MCF 10A (cell line): ENCODE measurements at regions of chr7 and their contacts with region 1.

Region 1: GRCh38 chr7:39948956-39949928 is 814 bp upstream of the CDK13 start:
- DNase-seq: peak; percentile 99
- H3K4me3 Mint-ChIP-seq: peak overlapping the region; percentile 96
- H3K27ac Mint-ChIP-seq: peak overlapping the region; percentile 96
- H3K4me1 Mint-ChIP-seq: no peaks in the 10 kb centered on the region
- H3K27me3 Mint-ChIP-seq: no peaks in the 10 kb centered on the region
- CTCF ChIP-seq: no peak

Region 2: GRCh38 chr7:39937366-39938153 is 11.7 kb before region 1 on chr7:
- CTCF ChIA-PET with region 1: interaction called, 5 read pairs
- POLR2A ChIA-PET with region 1: interaction called, 40 read pairs
- intact Hi-C with region 1: no loop called
- DNase-seq: peak; percentile 63
- H3K4me3 Mint-ChIP-seq: no peak overlapping the region
- H3K27ac Mint-ChIP-seq: no peak overlapping the region
- H3K4me1 Mint-ChIP-seq: peaks cover 8% of the 10 kb centered on the region
- H3K27me3 Mint-ChIP-seq: no peaks in the 10 kb centered on the region
- CTCF ChIP-seq: no peak

Region 3: DNA sequence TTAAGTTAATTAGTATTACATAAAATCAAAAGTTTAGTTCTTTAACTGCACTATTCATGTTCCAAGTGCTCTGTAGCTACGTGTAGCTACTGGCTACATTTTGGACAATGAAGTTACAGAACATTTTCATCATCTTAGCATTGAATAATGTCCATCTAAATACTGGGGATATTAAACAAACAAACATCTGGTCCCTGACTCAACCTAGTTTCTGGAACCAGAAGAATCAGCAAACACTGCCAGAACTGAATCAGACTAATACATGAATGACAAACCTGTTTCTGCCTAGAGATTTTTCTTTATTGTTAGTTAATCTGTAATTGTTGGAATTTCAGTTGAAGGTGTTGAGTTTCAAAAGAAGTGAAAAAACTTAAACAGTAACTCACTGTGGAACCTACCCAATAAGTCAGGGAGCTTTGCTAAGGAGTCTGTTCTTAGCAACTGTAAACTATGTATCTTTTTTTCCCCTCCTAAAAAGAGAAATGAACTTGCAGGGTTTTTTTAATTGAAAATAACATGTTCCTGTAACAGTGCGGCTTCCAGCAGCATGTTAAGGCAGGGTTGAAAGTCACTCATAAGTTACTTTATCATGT is 59.1 kb after region 1 on chr7:
- CTCF ChIA-PET with region 1: interaction called, 3 read pairs
- POLR2A ChIA-PET with region 1: no interaction called
- intact Hi-C with region 1: loop called (anchors 5 kb)
- DNase-seq: peak; percentile 53
- H3K4me3 Mint-ChIP-seq: no peak overlapping the region
- H3K27ac Mint-ChIP-seq: peak overlapping the region; percentile 78
- H3K4me1 Mint-ChIP-seq: peaks cover 20% of the 10 kb centered on the region
- H3K27me3 Mint-ChIP-seq: no peaks in the 10 kb centered on the region
- CTCF ChIP-seq: no peak

Region 4: DNA sequence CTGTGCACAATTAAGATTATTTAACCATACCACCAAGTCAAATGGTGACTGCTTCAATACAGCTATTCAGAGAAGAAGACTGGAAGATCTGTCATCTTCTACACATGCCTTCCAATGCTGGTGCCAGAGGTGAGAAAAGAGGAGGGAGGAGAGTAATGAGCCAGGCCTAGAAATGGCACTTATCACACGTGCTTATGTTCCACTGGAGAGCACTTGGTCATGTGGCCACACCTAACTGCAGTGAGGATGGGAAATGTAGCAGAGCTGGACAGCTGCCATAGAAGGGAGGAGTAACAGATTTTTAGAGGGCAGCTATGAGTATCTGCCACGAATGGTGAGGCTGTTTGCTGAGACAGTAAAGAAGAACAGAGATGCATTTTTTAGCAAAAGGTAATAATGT is 108.0 kb after region 1 on chr7:
- CTCF ChIA-PET with region 1: interaction called, 10 read pairs
- POLR2A ChIA-PET with region 1: interaction called, 5 read pairs
- intact Hi-C with region 1: loop called (anchors 1 kb)
- DNase-seq: peak; percentile 51
- H3K4me3 Mint-ChIP-seq: no peak overlapping the region
- H3K27ac Mint-ChIP-seq: peak overlapping the region; percentile 1
- H3K4me1 Mint-ChIP-seq: peaks cover 17% of the 10 kb centered on the region
- H3K27me3 Mint-ChIP-seq: no peaks in the 10 kb centered on the region
- CTCF ChIP-seq: no peak

Region 5: GRCh38 chr7:40134428-40135316 is 185.4 kb after region 1 on chr7 and contains the starts of genes MPLKIP and SUGCT:
- CTCF ChIA-PET with region 1: interaction called, 3 read pairs
- POLR2A ChIA-PET with region 1: interaction called, 13 read pairs
- intact Hi-C with region 1: no loop called
- DNase-seq: peak; percentile 86
- H3K4me3 Mint-ChIP-seq: peak within 1 kb of the TSS; percentile 84
- H3K27ac Mint-ChIP-seq: peak within 1 kb of the TSS; percentile 93
- H3K4me1 Mint-ChIP-seq: peaks cover 12% of the 10 kb centered on the region
- H3K27me3 Mint-ChIP-seq: no peaks in the 10 kb centered on the region
- CTCF ChIP-seq: peak; percentile 98
- total RNA-seq, gene MPLKIP: 30.6 and 31.3 TPM in 2 replicates
- total RNA-seq, gene SUGCT: 20.2 and 25.4 TPM in 2 replicates

Region 6: DNA sequence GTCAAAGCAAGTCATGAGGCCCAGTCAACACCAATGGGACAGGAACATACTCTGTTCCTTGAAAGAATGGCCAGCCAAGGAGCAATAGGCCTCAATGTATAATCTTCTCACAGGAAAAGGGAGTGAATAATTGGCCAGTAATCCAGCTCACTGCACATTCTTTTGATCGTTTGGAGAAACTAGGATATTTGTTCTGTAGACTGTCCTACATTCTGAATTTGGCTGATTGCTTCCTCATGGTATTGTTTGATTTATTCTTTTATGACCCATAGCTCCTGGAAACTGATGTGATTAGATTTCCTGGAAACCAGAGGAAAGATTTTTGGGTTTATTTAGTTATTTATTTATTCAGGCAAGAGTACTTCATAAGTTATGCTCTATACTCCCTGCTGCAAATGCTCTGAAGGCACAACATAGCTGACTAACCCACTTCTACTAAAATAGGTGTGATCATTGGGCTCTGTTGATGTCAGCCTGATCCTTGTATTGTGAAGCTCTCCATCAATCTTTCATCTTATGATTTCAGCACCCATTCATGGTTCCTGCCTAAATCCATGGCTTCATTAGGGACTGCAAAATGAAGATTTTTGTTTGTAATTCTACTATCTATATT is 930.8 kb after region 1 on chr7:
- CTCF ChIA-PET with region 1: no interaction called
- POLR2A ChIA-PET with region 1: no interaction called
- intact Hi-C with region 1: no loop called
- DNase-seq: no peak
- H3K4me3 Mint-ChIP-seq: no peak overlapping the region
- H3K27ac Mint-ChIP-seq: no peak overlapping the region
- H3K4me1 Mint-ChIP-seq: no peaks in the 10 kb centered on the region
- H3K27me3 Mint-ChIP-seq: no peaks in the 10 kb centered on the region
- CTCF ChIP-seq: no peak